AG04449 (cell line): ENCODE measurements at regions of chr10 and their contacts with region 1.

Region 1: GRCh38 chr10:91251430-91252056 is 31.1 kb downstream of the PCGF5 start:
- DNase-seq: peak; percentile 2
- H3K4me3 ChIP-seq: no peak overlapping the region
- CTCF ChIP-seq: peak; percentile 74

Region 2: DNA sequence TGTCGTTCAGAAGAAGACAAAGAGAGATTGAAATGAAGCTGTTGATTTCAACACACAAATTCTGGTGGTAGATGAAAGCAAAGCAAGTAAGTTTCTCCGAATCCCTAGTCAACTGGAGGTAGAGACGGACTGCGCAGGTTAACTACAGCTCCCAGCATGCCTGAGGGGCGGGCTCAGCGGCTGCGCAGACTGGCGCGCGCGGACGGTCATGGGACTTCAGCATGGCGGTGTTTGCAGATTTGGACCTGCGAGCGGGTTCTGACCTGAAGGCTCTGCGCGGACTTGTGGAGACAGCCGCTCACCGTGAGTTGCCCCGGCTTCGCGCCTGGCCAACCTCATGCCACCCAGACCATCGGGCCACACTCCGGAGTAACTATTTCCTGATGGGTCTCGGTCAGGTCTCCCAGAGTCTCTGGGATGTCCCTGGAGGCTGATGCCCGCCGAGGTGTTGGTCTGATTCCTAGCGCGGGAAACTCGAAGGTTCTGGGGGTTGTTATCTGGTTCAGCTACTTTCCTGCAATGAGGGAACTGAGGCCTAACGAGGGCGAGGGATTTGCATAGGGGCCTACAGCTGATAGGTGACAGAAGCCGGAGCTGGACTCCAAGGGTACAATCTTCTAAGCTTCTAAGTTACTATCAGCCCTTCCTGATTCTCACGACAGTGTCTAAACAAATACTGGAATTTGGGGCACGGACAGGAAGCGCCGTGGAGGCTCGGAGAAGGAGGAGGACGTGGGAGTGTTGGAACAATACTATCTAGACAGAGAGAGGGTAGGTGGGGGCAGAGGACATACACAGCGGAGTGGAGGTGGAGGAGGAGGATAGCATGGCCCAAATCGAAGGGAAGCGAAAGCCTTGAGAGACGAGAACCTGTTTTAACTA is 379.5 kb before region 1 on chr10 and contains the start of gene RPP30:
- CTCF ChIA-PET with region 1: interaction called, 10 read pairs
- POLR2A ChIA-PET with region 1: no interaction called
- DNase-seq: no peak
- H3K4me3 ChIP-seq: peak within 1 kb of the TSS; percentile 90
- CTCF ChIP-seq: no peak

Region 3: GRCh38 chr10:90884416-90884815 is 367.1 kb before region 1 on chr10:
- CTCF ChIA-PET with region 1: interaction called, 64 read pairs
- POLR2A ChIA-PET with region 1: no interaction called
- DNase-seq: no peak
- H3K4me3 ChIP-seq: no peak overlapping the region
- CTCF ChIP-seq: no peak

Region 4: DNA sequence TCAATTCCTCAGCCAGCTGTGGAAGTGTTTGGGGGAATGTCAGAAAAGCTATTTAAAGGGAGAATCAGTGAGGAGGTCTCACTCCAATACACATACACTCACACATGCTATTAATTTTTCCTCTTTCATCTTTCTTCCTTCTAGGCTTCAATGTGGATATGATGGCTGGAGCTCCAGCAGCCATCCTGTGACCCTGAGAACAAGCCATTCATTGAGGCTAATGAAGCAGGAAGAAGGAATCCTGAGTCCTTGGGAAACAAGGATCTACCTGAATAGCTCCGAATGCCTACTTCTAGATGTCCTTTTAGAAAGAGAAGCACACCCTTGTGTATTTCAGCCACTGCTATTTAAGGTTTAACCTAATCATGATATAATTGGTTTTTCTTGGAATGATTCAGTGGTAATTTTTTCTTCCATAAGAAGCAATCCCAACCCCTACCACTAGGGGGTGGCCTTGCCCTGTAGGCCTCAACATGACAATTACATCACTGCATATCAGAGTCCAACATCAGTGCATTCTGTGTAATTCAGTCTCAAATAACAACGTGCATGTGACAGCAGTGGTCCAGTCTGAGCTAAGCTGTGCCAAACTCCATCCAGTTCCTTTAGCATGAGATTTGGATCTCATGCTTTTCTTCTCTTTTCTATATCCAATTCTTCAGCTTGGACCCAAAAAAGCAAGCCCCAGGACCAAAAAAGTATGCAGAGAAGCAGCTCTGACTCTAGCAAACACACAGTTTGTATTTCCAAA is 245.4 kb before region 1 on chr10:
- CTCF ChIA-PET with region 1: interaction called, 99 read pairs
- POLR2A ChIA-PET with region 1: no interaction called
- DNase-seq: peak; percentile 41
- H3K4me3 ChIP-seq: no peak overlapping the region
- CTCF ChIP-seq: peak; percentile 77

Region 5: DNA sequence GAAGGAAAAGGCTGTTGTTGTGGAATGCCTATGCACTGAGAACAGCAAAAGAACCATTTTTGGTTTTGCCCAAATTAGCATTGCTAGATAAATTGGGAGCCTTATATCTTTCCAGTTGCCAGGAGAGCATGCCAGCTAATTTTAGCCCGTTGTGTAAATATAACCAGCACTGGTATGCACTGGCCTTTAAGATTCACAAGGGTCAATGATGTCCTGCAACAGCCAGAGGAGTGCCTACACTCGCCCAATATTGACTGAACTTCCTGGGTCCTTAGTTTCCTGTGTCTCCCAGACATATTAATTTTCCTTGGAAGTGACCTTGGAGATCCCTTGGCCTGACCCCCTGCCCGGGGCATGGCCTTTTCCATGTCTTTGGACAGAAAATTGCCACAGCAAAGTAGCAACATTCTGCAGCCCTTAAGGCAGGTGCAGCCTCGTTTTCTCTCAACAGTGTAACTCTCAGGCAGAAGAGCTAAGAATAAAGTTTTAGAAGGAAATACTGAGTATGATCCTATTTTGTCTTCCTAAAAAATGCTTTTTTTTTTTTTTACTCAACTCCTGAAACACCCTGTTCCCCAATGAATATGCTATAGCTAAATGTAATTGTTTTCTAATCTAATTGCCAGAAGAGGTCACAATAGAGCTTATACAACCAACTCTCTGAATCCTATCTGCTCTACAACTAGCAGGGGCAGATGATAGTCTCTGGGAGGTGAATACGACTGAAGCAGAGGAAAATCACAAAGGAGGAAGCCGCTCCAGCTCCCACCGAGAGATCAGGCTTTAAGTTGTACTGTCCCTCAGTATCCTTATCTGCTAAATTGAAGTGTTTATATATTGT is 163.0 kb before region 1 on chr10:
- CTCF ChIA-PET with region 1: interaction called, 116 read pairs
- POLR2A ChIA-PET with region 1: no interaction called
- DNase-seq: no peak
- H3K4me3 ChIP-seq: no peak overlapping the region
- CTCF ChIP-seq: no peak